Heart left ventricle (tissue), 16 donors: ENCODE measurements at regions of chr22 and their contacts with region 1.

Region 1: GRCh38 chr22:37199103-37199759 is 11.2 kb upstream of the C1QTNF6 start:
- DNase-seq: peak; percentile 97 to 100 (median 98)
- ATAC-seq: peak; percentile 87 to 93 (median 90)
- H3K4me3 ChIP-seq: peak overlapping the region; percentile 35 to 87 (median 66)
- H3K27ac ChIP-seq: peak overlapping the region; percentile 83 to 99 (median 96)
- H3K4me1 ChIP-seq: peaks cover 19 to 47% (median 34%) of the 10 kb centered on the region in 12 donors
- H3K27me3 ChIP-seq: no peaks in the 10 kb centered on the region
- CTCF ChIP-seq: peak; percentile 90 to 99 (median 96)
- POLR2A ChIP-seq: peak; percentile 70 to 97

Region 2: GRCh38 chr22:36775964-36776669 is 423.1 kb before region 1 on chr22 and contains the start of gene IFT27:
- intact Hi-C with region 1: loop called in 3 of 10 experiments (anchors 2 to 10 kb)
- DNase-seq: peak; percentile 96 to 99 (median 99)
- ATAC-seq: peak; percentile 98 to 99 (median 98)
- H3K4me3 ChIP-seq: peak within 1 kb of the TSS; percentile 40 to 98 (median 84)
- H3K27ac ChIP-seq: peak within 1 kb of the TSS; percentile 25 to 92 (median 84)
- H3K4me1 ChIP-seq: peaks cover 0 to 18% (median 11%) of the 10 kb centered on the region in 12 donors
- H3K27me3 ChIP-seq: no peaks in the 10 kb centered on the region
- CTCF ChIP-seq: no peak
- POLR2A ChIP-seq: peak in 1 of 2 donors; percentile 62
- total RNA-seq, gene IFT27: 18.9 to 33.8 (median 25.8) TPM

Region 3: GRCh38 chr22:37128541-37129281 is 70.5 kb before region 1 on chr22:
- intact Hi-C with region 1: loop called in 1 of 10 experiments (anchors 2 kb)
- DNase-seq: no peak
- ATAC-seq: peak in 1 of 4 donors; percentile 26
- H3K4me3 ChIP-seq: no peak overlapping the region
- H3K27ac ChIP-seq: no peak overlapping the region
- H3K4me1 ChIP-seq: no peaks in the 10 kb centered on the region
- H3K27me3 ChIP-seq: peaks cover 0 to 24% (median 5%) of the 10 kb centered on the region in 9 donors
- CTCF ChIP-seq: no peak
- POLR2A ChIP-seq: no peak

Region 4: GRCh38 chr22:37148742-37149665 is 50.2 kb before region 1 on chr22:
- intact Hi-C with region 1: no loop called
- DNase-seq: peak in 2 of 5 donors; percentile 12 to 42
- ATAC-seq: no peak
- H3K4me3 ChIP-seq: peak overlapping the region in 4 of 12 donors; percentile 3 to 56 (median 18)
- H3K27ac ChIP-seq: peak overlapping the region in 2 of 12 donors; percentile 5 to 72
- H3K4me1 ChIP-seq: peaks cover 0 to 6% (median 0%) of the 10 kb centered on the region in 12 donors
- H3K27me3 ChIP-seq: peaks cover 0 to 27% (median 4%) of the 10 kb centered on the region in 9 donors
- CTCF ChIP-seq: no peak
- POLR2A ChIP-seq: no peak

Region 5: GRCh38 chr22:37166675-37167066 is 32.6 kb before region 1 on chr22:
- intact Hi-C with region 1: loop called (anchors 1 to 2 kb)
- DNase-seq: peak; percentile 83 to 93 (median 89)
- ATAC-seq: peak; percentile 90 to 97 (median 93)
- H3K4me3 ChIP-seq: peak overlapping the region in 4 of 12 donors; percentile 13 to 43 (median 24)
- H3K27ac ChIP-seq: peak overlapping the region in 7 of 12 donors; percentile 2 to 71 (median 25)
- H3K4me1 ChIP-seq: peaks cover 0 to 31% (median 13%) of the 10 kb centered on the region in 12 donors
- H3K27me3 ChIP-seq: peaks cover 0 to 4% (median 0%) of the 10 kb centered on the region in 9 donors
- CTCF ChIP-seq: peak; percentile 86 to 98 (median 92)
- POLR2A ChIP-seq: no peak